H1 (cell line): ENCODE measurements at regions of chr13 and their contacts with region 1.

Region 1: GRCh38 chr13:75694722-75695121 is 58.6 kb downstream of the LMO7 start:
- DNase-seq: no peak
- H3K4me3 ChIP-seq: no peak overlapping the region
- H3K27ac ChIP-seq: no peak overlapping the region
- H3K4me1 ChIP-seq: no peaks in the 10 kb centered on the region
- H3K27me3 ChIP-seq: no peaks in the 10 kb centered on the region
- CTCF ChIP-seq: no peak
- EP300 ChIP-seq: no peak
- POLR2A ChIP-seq: no peak
- RAD21 ChIP-seq: no peak

Region 2: GRCh38 chr13:75675421-75675820 is 19.3 kb before region 1 on chr13:
- CTCF ChIA-PET with region 1: interaction called, 42 read pairs
- POLR2A ChIA-PET with region 1: no interaction called
- DNase-seq: no peak
- H3K4me3 ChIP-seq: no peak overlapping the region
- H3K27ac ChIP-seq: no peak overlapping the region
- H3K4me1 ChIP-seq: 0 out of 7 replicates have a peak, but pooled peaks cover 0 to 3% (median 0%) of the 10 kb centered on the region in 4 experiments
- H3K27me3 ChIP-seq: no peaks in the 10 kb centered on the region
- CTCF ChIP-seq: no peak
- EP300 ChIP-seq: no peak
- POLR2A ChIP-seq: no peak
- RAD21 ChIP-seq: no peak

Region 3: GRCh38 chr13:75760131-75761021 is 65.7 kb after region 1 on chr13:
- CTCF ChIA-PET with region 1: interaction called, 13 read pairs
- POLR2A ChIA-PET with region 1: no interaction called
- DNase-seq: no peak
- H3K4me3 ChIP-seq: no peak overlapping the region
- H3K27ac ChIP-seq: no peak overlapping the region
- H3K4me1 ChIP-seq: no peaks in the 10 kb centered on the region
- H3K27me3 ChIP-seq: no peaks in the 10 kb centered on the region
- CTCF ChIP-seq: no peak
- EP300 ChIP-seq: no peak
- POLR2A ChIP-seq: no peak
- RAD21 ChIP-seq: no peak; a peak in 1 of 4 replicates

Region 4: GRCh38 chr13:75803164-75803611 is 108.5 kb after region 1 on chr13:
- CTCF ChIA-PET with region 1: interaction called, 24 read pairs
- POLR2A ChIA-PET with region 1: no interaction called
- DNase-seq: peak; percentile 60 to 77
- H3K4me3 ChIP-seq: peak overlapping the region in 1 of 4 experiments; percentile 10; a peak in 1 of 8 replicates
- H3K27ac ChIP-seq: no peak overlapping the region
- H3K4me1 ChIP-seq: peaks cover 4 to 16% (median 13%) of the 10 kb centered on the region in 4 experiments; a peak in 6 of 7 replicates
- H3K27me3 ChIP-seq: no peaks in the 10 kb centered on the region
- CTCF ChIP-seq: no peak
- EP300 ChIP-seq: peak in 1 of 2 experiments; percentile 75; a peak in 1 of 3 replicates
- POLR2A ChIP-seq: no peak
- RAD21 ChIP-seq: no peak

Region 5: GRCh38 chr13:75902166-75903104 is 207.7 kb after region 1 on chr13:
- CTCF ChIA-PET with region 1: interaction called, 13 read pairs
- POLR2A ChIA-PET with region 1: no interaction called
- DNase-seq: no peak
- H3K4me3 ChIP-seq: no peak overlapping the region
- H3K27ac ChIP-seq: no peak overlapping the region
- H3K4me1 ChIP-seq: no peaks in the 10 kb centered on the region
- H3K27me3 ChIP-seq: no peaks in the 10 kb centered on the region
- CTCF ChIP-seq: no peak
- EP300 ChIP-seq: no peak
- POLR2A ChIP-seq: no peak
- RAD21 ChIP-seq: no peak

Region 6: DNA sequence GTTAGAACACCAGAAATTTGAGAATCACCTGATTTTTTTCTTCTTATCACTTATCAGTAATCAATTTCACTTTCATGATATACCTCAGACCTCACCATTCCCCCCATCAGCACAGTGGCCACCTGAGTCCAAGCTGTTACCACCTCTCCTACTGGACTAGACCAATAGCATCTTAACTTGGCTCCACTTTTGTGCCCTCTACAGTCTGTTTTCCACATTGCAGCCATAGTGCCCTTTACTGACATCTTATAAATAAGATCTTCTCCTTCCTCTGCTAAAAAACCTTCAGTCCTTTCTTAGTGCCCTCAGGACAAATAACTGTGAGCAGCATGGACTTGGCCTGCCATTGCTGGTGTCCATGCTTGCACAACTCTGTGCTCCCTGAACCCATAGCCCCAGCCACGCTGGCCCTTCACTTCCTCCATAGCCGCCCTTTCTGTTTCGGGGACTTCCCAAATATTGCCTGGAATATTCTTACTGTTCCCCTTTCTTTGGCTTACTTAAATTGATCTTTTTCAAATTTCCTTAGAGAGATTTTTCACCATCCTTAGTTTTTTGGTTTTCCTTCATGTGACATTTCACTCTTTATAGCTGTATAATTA is 322.2 kb after region 1 on chr13:
- CTCF ChIA-PET with region 1: interaction called, 12 read pairs
- POLR2A ChIA-PET with region 1: no interaction called
- DNase-seq: peak in 1 of 2 experiments; percentile 73
- H3K4me3 ChIP-seq: no peak overlapping the region
- H3K27ac ChIP-seq: no peak overlapping the region
- H3K4me1 ChIP-seq: no peaks in the 10 kb centered on the region
- H3K27me3 ChIP-seq: no peaks in the 10 kb centered on the region
- CTCF ChIP-seq: peak; percentile 5 to 75 (median 52); a peak in 3 of 4 replicates
- EP300 ChIP-seq: no peak
- POLR2A ChIP-seq: no peak
- RAD21 ChIP-seq: peak; percentile 61